HepG2 (cell line): ENCODE measurements at regions of chr6 and their contacts with region 1.

Region 1: GRCh38 chr6:96089173-96089572 is 73.4 kb downstream of the FUT9 start:
- DNase-seq: peak; percentile 20
- ATAC-seq: peak; percentile 71
- H3K4me3 ChIP-seq: no peak overlapping the region
- H3K27ac ChIP-seq: no peak overlapping the region
- H3K4me1 ChIP-seq: no peaks in the 10 kb centered on the region
- H3K27me3 ChIP-seq: no peaks in the 10 kb centered on the region
- CTCF ChIP-seq: peak; percentile 67
- EP300 ChIP-seq: no peak
- POLR2A ChIP-seq: no peak
- RAD21 ChIP-seq: no peak; the same call in 1 of the 2 replicates

Region 2: DNA sequence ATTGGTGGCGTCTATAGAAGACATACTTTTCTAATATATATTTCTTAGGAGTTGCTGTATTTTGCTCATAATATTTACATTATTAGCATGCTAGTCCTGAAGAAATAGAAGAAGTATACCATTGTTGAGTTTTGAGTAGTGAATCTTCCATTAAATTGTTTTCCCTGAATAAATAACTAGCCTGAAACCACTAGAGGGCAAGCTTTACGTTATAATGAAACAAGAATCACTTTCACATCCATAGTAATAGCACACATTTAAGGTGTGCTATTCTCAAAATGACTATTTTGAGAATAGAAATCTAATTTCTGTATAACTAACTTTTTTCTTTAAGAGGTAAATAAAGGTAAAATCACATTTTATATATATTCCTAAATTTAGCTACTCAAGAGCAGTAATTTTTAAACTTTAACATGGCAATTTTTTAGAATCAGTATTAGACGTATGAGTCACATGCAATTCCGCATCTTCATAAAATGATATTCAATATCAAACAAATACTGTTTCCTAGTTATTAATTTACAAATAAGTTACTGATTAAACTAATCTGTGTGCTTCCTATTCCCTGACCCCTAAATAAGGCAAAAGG is 725.1 kb before region 1 on chr6:
- CTCF ChIA-PET with region 1: no interaction called
- POLR2A ChIA-PET with region 1: no interaction called
- in situ Hi-C with region 1: no loop called
- intact Hi-C with region 1: loop called (anchors 2 kb)
- DNase-seq: peak; percentile 20
- ATAC-seq: 0 out of 3 replicates have a peak, but pooled peaks have one; percentile 46
- H3K4me3 ChIP-seq: no peak overlapping the region
- H3K27ac ChIP-seq: no peak overlapping the region
- H3K4me1 ChIP-seq: no peaks in the 10 kb centered on the region
- H3K27me3 ChIP-seq: no peaks in the 10 kb centered on the region
- CTCF ChIP-seq: no peak
- EP300 ChIP-seq: no peak
- POLR2A ChIP-seq: no peak
- RAD21 ChIP-seq: no peak

Region 3: DNA sequence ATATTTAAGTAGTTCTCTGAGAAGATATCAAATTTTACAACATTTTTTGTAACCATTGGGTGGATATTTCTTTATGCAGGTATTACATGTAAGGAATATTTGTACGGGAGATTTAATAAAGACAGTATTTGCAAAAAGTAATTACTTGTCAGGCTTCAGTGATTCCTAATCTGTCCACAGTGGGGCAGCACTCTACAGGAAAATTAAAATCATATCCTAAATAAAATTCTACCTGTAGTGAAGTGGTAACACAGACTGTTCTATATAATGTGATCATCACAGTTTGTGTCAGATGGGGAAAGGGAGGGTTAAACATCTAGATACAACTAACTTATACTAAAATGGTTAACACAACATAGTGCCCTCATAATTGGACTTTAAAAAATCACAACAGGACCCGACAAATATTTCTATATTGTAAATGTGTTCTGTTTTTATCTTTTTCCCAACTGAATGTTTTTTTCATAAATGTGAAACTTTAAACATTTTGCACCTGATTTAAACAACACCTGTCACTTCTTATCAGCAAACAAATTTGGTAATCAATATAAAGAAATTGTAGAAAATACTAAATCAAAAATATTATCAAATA is 657.4 kb before region 1 on chr6:
- CTCF ChIA-PET with region 1: interaction called, 8 read pairs
- POLR2A ChIA-PET with region 1: no interaction called
- in situ Hi-C with region 1: no loop called
- intact Hi-C with region 1: loop called (anchors 1 kb)
- DNase-seq: peak; percentile 9
- ATAC-seq: no peak
- H3K4me3 ChIP-seq: no peak overlapping the region
- H3K27ac ChIP-seq: no peak overlapping the region
- H3K4me1 ChIP-seq: no peaks in the 10 kb centered on the region
- H3K27me3 ChIP-seq: no peaks in the 10 kb centered on the region
- CTCF ChIP-seq: peak; percentile 59
- EP300 ChIP-seq: no peak
- POLR2A ChIP-seq: no peak
- RAD21 ChIP-seq: no peak

Region 4: GRCh38 chr6:95648638-95649037 is 440.5 kb before region 1 on chr6:
- CTCF ChIA-PET with region 1: interaction called, 8 read pairs
- POLR2A ChIA-PET with region 1: no interaction called
- in situ Hi-C with region 1: loop called (anchors 10 kb)
- intact Hi-C with region 1: loop called (anchors 1 kb)
- DNase-seq: peak; percentile 46
- ATAC-seq: peak; percentile 90
- H3K4me3 ChIP-seq: no peak overlapping the region
- H3K27ac ChIP-seq: no peak overlapping the region
- H3K4me1 ChIP-seq: no peaks in the 10 kb centered on the region
- H3K27me3 ChIP-seq: no peaks in the 10 kb centered on the region
- CTCF ChIP-seq: peak; percentile 74
- EP300 ChIP-seq: no peak
- POLR2A ChIP-seq: no peak
- RAD21 ChIP-seq: peak; percentile 41; the same call in 1 of the 2 replicates